HepG2 (cell line): ENCODE measurements at regions of chr6 and their contacts with region 1.

Region 1: DNA sequence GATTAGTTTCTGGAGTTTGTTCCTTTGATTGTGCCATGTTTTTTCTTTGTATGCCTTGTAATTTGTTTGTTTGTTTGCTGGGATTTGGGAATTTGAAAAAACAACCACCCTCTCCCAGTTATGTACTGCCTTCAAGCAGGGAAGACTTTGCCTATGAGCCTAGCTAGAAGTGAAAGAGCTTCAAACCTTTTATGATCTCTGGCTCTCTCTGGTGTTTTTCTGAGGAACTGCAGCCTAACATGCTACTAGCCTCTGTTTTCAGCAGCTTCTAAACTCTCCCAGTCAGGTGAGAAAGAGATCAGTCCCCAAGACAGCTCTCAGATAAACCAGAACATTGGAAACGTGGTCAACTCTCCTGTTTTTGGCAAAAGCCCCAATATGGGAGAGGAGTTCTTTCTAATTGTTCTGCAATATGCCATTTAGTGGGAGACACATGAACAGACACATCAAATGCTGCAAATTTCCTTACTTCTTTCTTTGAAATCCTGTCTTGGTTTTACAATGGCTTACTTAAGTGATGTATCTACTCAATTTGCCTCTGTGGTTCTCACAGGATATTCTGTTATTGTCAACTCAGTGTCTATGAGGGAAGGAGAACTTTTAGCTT is 58.9 kb upstream of the SERINC1 start:
- DNase-seq: peak; percentile 69
- ATAC-seq: peak; percentile 96
- H3K4me3 ChIP-seq: no peak overlapping the region
- H3K27ac ChIP-seq: no peak overlapping the region
- H3K4me1 ChIP-seq: no peaks in the 10 kb centered on the region
- H3K27me3 ChIP-seq: no peaks in the 10 kb centered on the region
- CTCF ChIP-seq: peak; percentile 90
- EP300 ChIP-seq: no peak
- POLR2A ChIP-seq: no peak
- RAD21 ChIP-seq: peak; percentile 75

Region 2: DNA sequence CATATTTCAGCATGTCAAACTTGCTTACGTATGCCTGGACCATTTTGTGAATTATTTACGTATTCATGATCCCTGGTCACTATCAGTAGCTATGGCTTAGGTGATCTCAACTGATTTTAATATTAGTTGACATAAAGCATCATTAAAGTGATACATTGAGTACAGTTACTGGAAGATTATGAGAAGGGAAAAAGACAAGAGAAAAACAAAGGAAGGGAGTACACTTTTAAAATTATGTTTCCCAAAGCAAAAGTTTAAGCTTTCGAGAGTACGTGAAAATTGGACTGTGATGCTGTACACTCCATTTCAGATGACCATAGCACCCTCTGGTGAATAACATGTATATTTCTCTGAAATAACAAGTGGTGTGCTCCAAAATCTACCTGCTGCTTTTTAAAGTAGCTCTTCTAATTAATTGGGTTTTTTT is 346.1 kb before region 1 on chr6:
- CTCF ChIA-PET with region 1: no interaction called
- POLR2A ChIA-PET with region 1: no interaction called
- in situ Hi-C with region 1: no loop called
- intact Hi-C with region 1: no loop called
- DNase-seq: peak; percentile 16
- ATAC-seq: peak; percentile 72
- H3K4me3 ChIP-seq: no peak overlapping the region
- H3K27ac ChIP-seq: no peak overlapping the region
- H3K4me1 ChIP-seq: no peaks in the 10 kb centered on the region
- H3K27me3 ChIP-seq: no peaks in the 10 kb centered on the region
- CTCF ChIP-seq: peak; percentile 39; the same call in 1 of the 2 replicates
- EP300 ChIP-seq: no peak
- POLR2A ChIP-seq: no peak
- RAD21 ChIP-seq: no peak

Region 3: DNA sequence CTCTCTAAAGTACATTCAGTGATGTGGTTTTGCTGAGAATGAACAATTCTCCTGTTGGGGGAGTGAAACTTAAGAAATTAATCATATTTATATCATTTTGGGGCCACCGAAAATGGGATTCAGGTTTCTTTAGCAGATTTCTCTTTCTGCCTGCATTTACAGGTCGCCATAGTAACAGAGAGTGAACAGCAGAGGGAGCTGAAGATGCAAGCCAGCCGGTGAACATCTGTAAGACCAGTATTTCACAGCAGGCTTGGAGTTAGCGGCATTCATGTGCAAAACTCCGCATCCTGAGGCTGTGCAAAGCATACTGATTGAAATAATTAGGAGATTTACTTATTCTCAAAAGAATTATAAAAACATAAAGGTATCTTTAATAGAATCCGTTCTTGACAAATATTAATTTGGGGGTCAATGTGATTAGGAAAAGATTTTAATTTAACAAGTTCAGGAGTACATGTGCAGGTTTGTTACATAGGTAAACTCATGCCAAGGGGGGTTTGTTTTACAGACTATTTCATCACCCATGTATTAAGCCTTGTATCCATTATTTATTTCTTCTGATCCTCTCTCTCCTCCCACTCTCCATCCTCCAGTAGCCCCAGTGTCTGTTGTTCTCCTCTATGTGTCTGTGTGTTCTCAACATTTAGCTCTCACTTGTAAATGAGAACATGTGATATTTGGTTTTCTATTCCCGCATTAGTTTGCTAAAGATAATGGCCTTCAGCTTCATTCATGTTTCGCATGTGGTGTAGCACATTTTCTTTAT is 148.9 kb before region 1 on chr6:
- CTCF ChIA-PET with region 1: interaction called, 29 read pairs
- POLR2A ChIA-PET with region 1: no interaction called
- in situ Hi-C with region 1: loop called (anchors 25 kb)
- intact Hi-C with region 1: loop called (anchors 1 kb)
- DNase-seq: peak; percentile 69
- ATAC-seq: peak; percentile 98
- H3K4me3 ChIP-seq: no peak overlapping the region
- H3K27ac ChIP-seq: no peak overlapping the region
- H3K4me1 ChIP-seq: no peaks in the 10 kb centered on the region
- H3K27me3 ChIP-seq: 0 out of 5 replicates have a peak, but pooled peaks cover 0 to 5% of the 10 kb centered on the region in 2 experiments
- CTCF ChIP-seq: peak; percentile 81
- EP300 ChIP-seq: no peak
- POLR2A ChIP-seq: no peak
- RAD21 ChIP-seq: peak; percentile 46; the same call in 1 of the 2 replicates

Region 4: GRCh38 chr6:122399384-122400158 is 131.0 kb before region 1 on chr6 and contains the start of gene HSF2:
- CTCF ChIA-PET with region 1: no interaction called
- POLR2A ChIA-PET with region 1: no interaction called
- in situ Hi-C with region 1: loop called (anchors 25 kb)
- intact Hi-C with region 1: no loop called
- DNase-seq: peak; percentile 96
- ATAC-seq: peak; percentile 100
- H3K4me3 ChIP-seq: peak within 1 kb of the TSS; percentile 65 to 100 (median 97)
- H3K27ac ChIP-seq: peak within 1 kb of the TSS; percentile 88
- H3K4me1 ChIP-seq: peaks cover 37% of the 10 kb centered on the region
- H3K27me3 ChIP-seq: peaks cover 0 to 2% of the 10 kb centered on the region in 2 experiments; a peak in 1 of 5 replicates
- CTCF ChIP-seq: peak; percentile 61
- EP300 ChIP-seq: no peak
- POLR2A ChIP-seq: peak; percentile 78 to 81
- RAD21 ChIP-seq: peak; percentile 32
- total RNA-seq, gene HSF2: 24.8 and 27.6 TPM in 2 replicates

Region 5: GRCh38 chr6:122491919-122492555 is 38.5 kb before region 1 on chr6:
- CTCF ChIA-PET with region 1: interaction called, 49 read pairs
- POLR2A ChIA-PET with region 1: interaction called, 4 read pairs
- in situ Hi-C with region 1: loop called (anchors 5 kb)
- intact Hi-C with region 1: loop called (anchors 1 kb)
- DNase-seq: peak; percentile 68
- ATAC-seq: peak; percentile 100
- H3K4me3 ChIP-seq: no peak overlapping the region
- H3K27ac ChIP-seq: no peak overlapping the region
- H3K4me1 ChIP-seq: no peaks in the 10 kb centered on the region
- H3K27me3 ChIP-seq: no peaks in the 10 kb centered on the region
- CTCF ChIP-seq: peak; percentile 89
- EP300 ChIP-seq: no peak
- POLR2A ChIP-seq: no peak
- RAD21 ChIP-seq: peak; percentile 67

Region 6: DNA sequence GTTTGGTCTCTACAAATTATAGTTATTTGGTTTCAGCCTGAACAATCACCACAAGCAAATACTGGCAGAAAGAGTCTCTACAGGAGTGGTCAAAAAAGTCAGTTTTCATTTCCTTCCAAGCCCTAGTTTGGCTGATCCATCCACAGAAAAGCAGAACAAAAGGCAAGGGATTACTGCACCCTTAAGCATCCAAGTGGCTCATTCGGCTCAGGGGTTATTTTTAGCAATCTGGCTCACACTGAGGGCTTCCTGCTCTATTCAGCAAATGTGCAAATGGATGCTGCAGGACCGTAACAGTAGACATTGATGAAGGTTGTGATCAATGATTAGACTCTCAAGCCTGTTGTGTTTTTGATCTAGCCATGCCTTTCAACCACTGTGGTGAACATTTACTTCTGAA is 186.8 kb after region 1 on chr6:
- CTCF ChIA-PET with region 1: no interaction called
- POLR2A ChIA-PET with region 1: no interaction called
- in situ Hi-C with region 1: no loop called
- intact Hi-C with region 1: no loop called
- DNase-seq: no peak
- ATAC-seq: no peak
- H3K4me3 ChIP-seq: no peak overlapping the region
- H3K27ac ChIP-seq: no peak overlapping the region
- H3K4me1 ChIP-seq: no peaks in the 10 kb centered on the region
- H3K27me3 ChIP-seq: no peaks in the 10 kb centered on the region; a peak in 1 of 5 replicates
- CTCF ChIP-seq: no peak
- EP300 ChIP-seq: no peak
- POLR2A ChIP-seq: no peak
- RAD21 ChIP-seq: no peak